IMR-90 (cell line): ENCODE measurements at regions of chr2 and their contacts with region 1.

Region 1: GRCh38 chr2:158456309-158457066 is at the starts of genes CCDC148 and PKP4:
- DNase-seq: peak; percentile 89
- ATAC-seq: peak; percentile 92
- H3K4me3 ChIP-seq: peak within 1 kb of the TSS; percentile 90
- H3K27ac ChIP-seq: peak within 1 kb of the TSS; percentile 76
- H3K4me1 ChIP-seq: peaks cover 2% of the 10 kb centered on the region
- H3K27me3 ChIP-seq: peaks cover 4% of the 10 kb centered on the region; the same call in 1 of the 2 replicates
- CTCF ChIP-seq: peak; percentile 33
- POLR2A ChIP-seq: 0 out of 2 replicates have a peak, but pooled peaks have one; percentile 17
- RAD21 ChIP-seq: peak; percentile 4; the same call in 1 of the 2 replicates
- total RNA-seq, gene CCDC148: 0.18 and 0.56 TPM in 2 replicates
- total RNA-seq, gene PKP4: 37.5 and 37.8 TPM in 2 replicates

Region 2: DNA sequence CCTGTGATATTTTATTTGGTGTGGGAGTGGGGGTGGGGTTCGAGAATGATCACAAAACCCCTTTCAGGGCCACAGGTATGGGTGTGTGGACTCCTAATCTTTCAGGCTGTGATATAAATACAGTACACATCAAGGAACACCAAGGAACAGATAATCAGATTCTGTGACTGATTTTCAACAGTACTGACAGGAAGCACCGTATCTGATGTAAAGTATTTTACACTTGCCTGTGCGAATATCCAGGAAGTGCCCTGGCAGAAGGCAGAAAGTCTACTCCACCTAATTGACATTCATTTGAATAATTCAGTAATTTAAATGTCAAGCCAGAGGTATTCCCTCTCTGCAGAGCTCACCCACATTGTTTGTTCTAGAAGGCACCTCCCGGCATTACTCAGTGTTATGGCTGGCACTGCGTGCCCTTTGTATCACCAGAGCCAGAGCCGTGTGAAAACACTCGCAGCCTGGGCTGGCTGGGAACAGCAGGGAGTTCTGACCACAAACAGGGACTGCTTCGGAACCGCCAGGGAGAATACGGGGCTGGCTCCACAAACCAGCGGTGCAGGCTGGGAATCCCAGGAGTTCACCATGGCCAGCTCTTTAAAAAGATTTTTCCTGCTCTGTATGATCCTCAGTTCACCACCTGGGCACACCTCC is 672.2 kb before region 1 on chr2:
- CTCF ChIA-PET with region 1: interaction called, 3 read pairs
- POLR2A ChIA-PET with region 1: no interaction called
- dilution Hi-C with region 1: no loop called
- in situ Hi-C with region 1: no loop called
- intact Hi-C with region 1: loop called (anchors 10 kb)
- DNase-seq: peak; percentile 21
- ATAC-seq: peak; percentile 31
- H3K4me3 ChIP-seq: no peak overlapping the region
- H3K27ac ChIP-seq: no peak overlapping the region
- H3K4me1 ChIP-seq: peaks cover 14% of the 10 kb centered on the region
- H3K27me3 ChIP-seq: no peaks in the 10 kb centered on the region
- CTCF ChIP-seq: no peak
- POLR2A ChIP-seq: no peak
- RAD21 ChIP-seq: no peak

Region 3: DNA sequence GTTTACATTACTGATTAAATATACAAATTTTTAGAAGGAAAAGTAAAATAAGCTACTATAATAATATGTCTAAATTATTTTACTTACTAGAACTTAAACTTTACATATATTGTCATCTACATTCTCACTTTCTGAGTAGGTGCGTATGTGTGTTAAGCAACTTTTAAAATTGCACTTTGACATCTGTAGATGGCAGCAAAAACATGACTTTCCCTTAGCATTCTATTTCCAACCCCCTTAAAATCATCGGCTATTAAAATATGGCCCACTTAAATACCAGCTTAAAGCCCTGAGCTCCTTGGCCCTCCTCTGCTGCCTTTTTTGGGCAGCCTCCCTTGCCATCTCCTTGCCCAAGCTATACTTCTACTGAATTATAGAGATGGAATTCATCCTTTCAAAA is 276.8 kb before region 1 on chr2:
- CTCF ChIA-PET with region 1: interaction called, 6 read pairs
- POLR2A ChIA-PET with region 1: no interaction called
- dilution Hi-C with region 1: no loop called
- in situ Hi-C with region 1: no loop called
- intact Hi-C with region 1: loop called (anchors 5 kb)
- DNase-seq: peak; percentile 26
- ATAC-seq: peak; percentile 54
- H3K4me3 ChIP-seq: no peak overlapping the region
- H3K27ac ChIP-seq: no peak overlapping the region
- H3K4me1 ChIP-seq: no peaks in the 10 kb centered on the region
- H3K27me3 ChIP-seq: peaks cover 2% of the 10 kb centered on the region
- CTCF ChIP-seq: peak; percentile 54
- POLR2A ChIP-seq: no peak
- RAD21 ChIP-seq: peak; percentile 66

Region 4: GRCh38 chr2:158497486-158497885 is 41.0 kb after region 1 on chr2:
- CTCF ChIA-PET with region 1: no interaction called
- POLR2A ChIA-PET with region 1: no interaction called
- dilution Hi-C with region 1: no loop called
- in situ Hi-C with region 1: no loop called
- intact Hi-C with region 1: loop called (anchors 2 kb)
- DNase-seq: peak; percentile 50
- ATAC-seq: no peak
- H3K4me3 ChIP-seq: no peak overlapping the region
- H3K27ac ChIP-seq: no peak overlapping the region
- H3K4me1 ChIP-seq: peaks cover 21% of the 10 kb centered on the region
- H3K27me3 ChIP-seq: no peaks in the 10 kb centered on the region
- CTCF ChIP-seq: no peak
- POLR2A ChIP-seq: no peak
- RAD21 ChIP-seq: no peak

Region 5: GRCh38 chr2:158586491-158586890 is 130.0 kb after region 1 on chr2:
- CTCF ChIA-PET with region 1: no interaction called
- POLR2A ChIA-PET with region 1: no interaction called
- dilution Hi-C with region 1: no loop called
- in situ Hi-C with region 1: no loop called
- intact Hi-C with region 1: loop called (anchors 5 kb)
- DNase-seq: peak; percentile 95
- ATAC-seq: peak; percentile 93
- H3K4me3 ChIP-seq: no peak overlapping the region
- H3K27ac ChIP-seq: no peak overlapping the region
- H3K4me1 ChIP-seq: peaks cover 2% of the 10 kb centered on the region; the same call in 1 of the 2 replicates
- H3K27me3 ChIP-seq: no peaks in the 10 kb centered on the region
- CTCF ChIP-seq: no peak
- POLR2A ChIP-seq: no peak
- RAD21 ChIP-seq: no peak

Region 6: DNA sequence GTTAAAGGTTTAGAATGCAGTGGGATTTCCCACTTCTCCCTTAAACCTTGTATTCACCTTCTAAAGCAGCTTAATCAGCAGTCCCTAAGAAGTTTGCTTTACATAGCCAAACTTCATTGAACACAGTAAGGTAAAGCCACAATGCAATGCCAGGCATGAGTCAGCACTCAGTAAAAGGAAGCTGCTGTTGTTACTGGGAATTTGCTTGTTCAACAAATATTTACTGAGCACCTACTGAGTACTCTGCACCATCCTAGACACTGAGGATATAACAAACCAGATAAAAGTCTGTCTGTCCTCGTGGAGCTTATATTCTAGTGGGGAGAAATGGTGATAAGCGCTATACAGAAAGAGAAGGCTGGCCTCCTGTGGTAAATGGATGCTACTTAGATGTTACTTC is 163.0 kb after region 1 on chr2:
- CTCF ChIA-PET with region 1: no interaction called
- POLR2A ChIA-PET with region 1: no interaction called
- dilution Hi-C with region 1: no loop called
- in situ Hi-C with region 1: no loop called
- intact Hi-C with region 1: loop called (anchors 1 kb)
- DNase-seq: peak; percentile 57
- ATAC-seq: peak; percentile 74
- H3K4me3 ChIP-seq: no peak overlapping the region
- H3K27ac ChIP-seq: no peak overlapping the region
- H3K4me1 ChIP-seq: no peaks in the 10 kb centered on the region; the same call in 1 of the 2 replicates
- H3K27me3 ChIP-seq: no peaks in the 10 kb centered on the region
- CTCF ChIP-seq: no peak
- POLR2A ChIP-seq: no peak
- RAD21 ChIP-seq: no peak

Region 7: DNA sequence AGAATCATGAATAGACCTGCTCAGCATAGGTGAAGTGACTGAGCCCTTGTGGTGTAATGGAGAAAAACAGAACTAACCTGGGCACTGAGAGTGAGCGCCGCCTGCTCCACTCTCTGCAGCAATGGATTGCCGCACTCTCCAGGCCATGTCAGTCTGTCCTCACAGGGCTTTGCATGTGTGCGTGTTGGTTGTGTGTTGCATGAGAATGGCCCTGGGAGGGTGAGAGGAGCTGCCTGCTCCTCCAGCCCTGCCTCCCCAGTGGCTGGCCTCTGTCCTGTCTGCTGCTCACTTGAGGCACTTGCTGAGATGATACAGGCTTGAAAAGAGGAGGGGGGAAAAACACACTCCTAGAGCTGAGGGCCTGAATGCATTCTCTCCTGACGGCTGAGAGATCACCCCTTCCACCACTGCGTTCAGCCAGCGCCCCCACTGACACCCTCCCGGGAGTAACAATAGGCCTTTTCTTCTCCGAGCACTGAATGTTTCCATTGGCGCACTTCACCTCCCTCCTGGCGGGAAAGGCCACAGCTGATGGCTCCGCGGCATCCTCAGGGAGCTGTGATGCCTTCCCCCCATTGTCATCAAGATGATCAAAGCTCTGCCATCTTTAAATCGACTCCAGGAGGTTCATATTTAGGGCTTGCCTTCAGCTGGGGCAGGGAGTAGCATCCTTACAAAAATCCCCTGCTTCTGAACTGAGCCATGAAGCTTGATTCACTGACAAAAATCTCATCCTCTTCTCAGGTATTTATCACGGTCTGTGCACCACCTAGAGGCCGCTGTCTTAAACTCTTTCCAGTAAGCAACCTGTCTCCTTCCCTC is 288.8 kb after region 1 on chr2:
- CTCF ChIA-PET with region 1: interaction called, 11 read pairs
- POLR2A ChIA-PET with region 1: no interaction called
- dilution Hi-C with region 1: no loop called
- in situ Hi-C with region 1: loop called (anchors 10 kb)
- intact Hi-C with region 1: loop called (anchors 2 kb)
- DNase-seq: peak; percentile 74
- ATAC-seq: peak; percentile 88
- H3K4me3 ChIP-seq: no peak overlapping the region
- H3K27ac ChIP-seq: no peak overlapping the region
- H3K4me1 ChIP-seq: no peaks in the 10 kb centered on the region
- H3K27me3 ChIP-seq: peaks cover 31% of the 10 kb centered on the region
- CTCF ChIP-seq: peak; percentile 68
- POLR2A ChIP-seq: 0 out of 2 replicates have a peak, but pooled peaks have one; percentile 23
- RAD21 ChIP-seq: peak; percentile 81

Region 8: DNA sequence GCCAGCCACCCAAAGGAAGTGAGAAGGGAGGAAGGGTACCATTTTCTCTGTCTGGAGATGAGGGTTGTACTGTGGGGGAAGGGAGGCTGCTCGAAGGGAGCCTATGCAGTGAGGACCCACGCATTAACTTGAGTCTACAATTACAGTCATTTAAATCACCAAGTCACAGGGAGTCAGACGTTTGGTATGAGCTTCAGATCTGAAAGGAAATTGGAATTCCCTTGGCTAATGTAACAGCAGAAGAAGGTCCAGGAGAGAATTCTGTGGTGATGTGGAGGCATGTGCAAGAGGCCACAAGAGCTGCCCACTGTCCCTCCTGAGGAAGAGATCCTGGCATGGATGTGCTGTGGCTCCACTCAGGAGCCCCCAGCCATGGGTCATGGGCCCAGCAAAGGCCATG is 361.1 kb after region 1 on chr2:
- CTCF ChIA-PET with region 1: no interaction called
- POLR2A ChIA-PET with region 1: no interaction called
- dilution Hi-C with region 1: no loop called
- in situ Hi-C with region 1: no loop called
- intact Hi-C with region 1: no loop called
- DNase-seq: peak; percentile 25
- ATAC-seq: peak; percentile 29
- H3K4me3 ChIP-seq: no peak overlapping the region
- H3K27ac ChIP-seq: no peak overlapping the region
- H3K4me1 ChIP-seq: no peaks in the 10 kb centered on the region
- H3K27me3 ChIP-seq: peaks cover 14% of the 10 kb centered on the region
- CTCF ChIP-seq: no peak
- POLR2A ChIP-seq: no peak
- RAD21 ChIP-seq: no peak